Motor neuron (in vitro differentiated cells): ENCODE measurements at regions of chr17 and their contacts with region 1.

Region 1: DNA sequence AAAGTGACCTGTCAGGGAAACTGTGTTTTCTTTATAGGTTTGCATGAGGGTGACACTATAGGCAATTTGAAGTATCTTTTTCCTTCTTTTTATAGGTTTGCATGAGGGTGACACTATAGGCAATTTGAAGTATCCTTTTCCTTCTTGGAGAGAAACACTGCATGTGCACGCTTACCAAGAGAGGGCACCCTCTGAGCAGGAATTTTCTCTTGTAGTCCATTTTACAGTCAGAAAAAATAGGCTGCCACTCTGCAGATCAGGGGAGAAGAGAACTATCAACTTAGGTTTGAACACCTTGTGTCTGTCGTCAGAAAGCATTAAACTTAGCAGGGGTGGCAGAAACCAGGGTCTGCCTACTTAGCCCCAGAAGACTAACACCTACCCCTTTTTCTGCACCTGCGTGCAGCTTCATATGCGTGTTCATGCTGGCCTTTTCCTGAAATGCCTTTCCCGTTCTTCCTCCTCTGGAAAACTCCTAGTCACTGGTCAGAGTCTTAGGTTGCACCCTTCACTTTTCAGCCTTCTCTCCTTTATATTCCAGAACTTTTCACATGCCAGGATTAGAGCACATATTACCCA is 16.4 kb upstream of the SMIM36 start:
- ATAC-seq: peak; percentile 51 to 84 (median 68)
- H3K4me3 ChIP-seq: no peak overlapping the region
- H3K27ac ChIP-seq: no peak overlapping the region
- H3K4me1 ChIP-seq: peaks cover 0 to 2% of the 10 kb centered on the region in 2 donors

Region 2: DNA sequence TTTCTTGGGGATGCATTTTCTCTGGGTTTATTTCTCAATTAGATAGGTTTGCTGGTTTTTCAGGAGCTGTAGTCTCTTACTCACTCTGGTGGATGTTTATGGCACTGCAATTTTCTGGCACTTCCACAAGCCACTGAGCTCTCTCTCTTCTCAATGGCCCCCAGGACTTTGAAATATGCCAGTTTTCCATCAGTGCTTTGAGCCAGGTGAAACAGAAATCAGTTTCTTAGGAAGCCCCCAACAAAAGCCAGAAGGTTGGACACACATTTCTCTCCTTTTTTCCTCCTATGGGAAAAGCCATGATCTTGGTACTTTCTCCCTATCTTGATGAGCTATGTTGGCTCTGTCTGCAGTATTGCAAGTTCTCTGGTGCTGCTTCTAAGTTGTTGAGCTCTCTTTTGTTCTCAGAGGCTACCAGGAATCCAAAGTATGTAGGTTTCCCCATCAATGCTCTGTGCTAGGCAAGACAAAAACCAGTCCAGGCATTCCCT is 74.3 kb after region 1 on chr17:
- in situ Hi-C with region 1: loop called in 1 of 9 experiments (anchors 10 kb)
- ATAC-seq: peak in 4 of 8 experiments; percentile 29 to 74 (median 66)
- H3K4me3 ChIP-seq: no peak overlapping the region
- H3K27ac ChIP-seq: no peak overlapping the region
- H3K4me1 ChIP-seq: no peaks in the 10 kb centered on the region

Region 3: DNA sequence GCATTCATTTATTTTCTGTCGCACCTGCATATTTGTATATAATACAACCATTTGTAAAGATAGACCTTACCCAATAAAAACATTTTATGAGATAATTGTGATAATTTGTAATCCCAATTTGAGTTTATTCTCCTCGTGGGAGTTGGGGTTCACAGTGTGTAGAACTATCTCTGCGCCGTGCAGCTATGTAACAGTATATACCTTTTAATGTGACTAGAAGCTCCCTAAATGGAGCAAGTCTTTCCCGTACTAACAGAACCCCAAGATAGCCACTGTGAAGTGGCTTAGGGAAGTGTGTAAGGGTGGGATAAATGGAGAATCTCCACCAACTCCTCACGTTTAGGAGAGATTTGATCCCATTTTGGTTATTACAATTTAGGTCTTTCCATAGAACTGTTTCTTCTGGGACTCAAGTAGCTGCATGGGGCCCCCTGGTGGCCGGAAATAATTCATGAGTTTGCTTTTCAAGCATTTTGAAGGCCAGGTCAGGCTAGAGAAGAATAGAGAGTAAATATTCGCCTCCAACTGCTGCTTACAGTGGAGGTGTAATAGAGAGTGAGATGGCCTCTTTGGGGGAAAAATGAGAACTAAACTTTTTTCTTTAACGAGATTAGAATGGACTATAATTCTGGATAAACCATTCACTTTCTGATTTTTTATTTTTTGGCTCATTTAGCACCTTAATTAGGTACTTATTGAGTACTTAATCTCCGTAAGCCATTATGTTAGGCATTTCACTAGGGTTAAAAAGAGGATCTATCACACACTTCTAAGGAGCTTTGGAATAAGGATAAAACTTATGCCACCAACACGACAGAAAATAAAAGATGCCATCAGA is 190.5 kb after region 1 on chr17:
- in situ Hi-C with region 1: loop called in 4 of 9 experiments (anchors 5 to 25 kb)
- ATAC-seq: peak in 5 of 8 experiments; percentile 40 to 81 (median 61)
- H3K4me3 ChIP-seq: no peak overlapping the region
- H3K27ac ChIP-seq: no peak overlapping the region
- H3K4me1 ChIP-seq: peaks cover 3 to 8% of the 10 kb centered on the region in 2 donors

Region 4: GRCh38 chr17:55750750-55751657 is 223.4 kb after region 1 on chr17 and contains the start of gene PCTP:
- in situ Hi-C with region 1: loop called in 2 of 9 experiments (anchors 25 kb)
- ATAC-seq: peak; percentile 95 to 97 (median 96)
- H3K4me3 ChIP-seq: peak within 1 kb of the TSS; percentile 43 to 68 (median 52)
- H3K27ac ChIP-seq: peak within 1 kb of the TSS in 1 of 2 donors; percentile 81
- H3K4me1 ChIP-seq: peaks cover 6 to 9% of the 10 kb centered on the region in 2 donors
- total RNA-seq, gene PCTP: 4.6 to 21.0 (median 13.0) TPM

Region 5: DNA sequence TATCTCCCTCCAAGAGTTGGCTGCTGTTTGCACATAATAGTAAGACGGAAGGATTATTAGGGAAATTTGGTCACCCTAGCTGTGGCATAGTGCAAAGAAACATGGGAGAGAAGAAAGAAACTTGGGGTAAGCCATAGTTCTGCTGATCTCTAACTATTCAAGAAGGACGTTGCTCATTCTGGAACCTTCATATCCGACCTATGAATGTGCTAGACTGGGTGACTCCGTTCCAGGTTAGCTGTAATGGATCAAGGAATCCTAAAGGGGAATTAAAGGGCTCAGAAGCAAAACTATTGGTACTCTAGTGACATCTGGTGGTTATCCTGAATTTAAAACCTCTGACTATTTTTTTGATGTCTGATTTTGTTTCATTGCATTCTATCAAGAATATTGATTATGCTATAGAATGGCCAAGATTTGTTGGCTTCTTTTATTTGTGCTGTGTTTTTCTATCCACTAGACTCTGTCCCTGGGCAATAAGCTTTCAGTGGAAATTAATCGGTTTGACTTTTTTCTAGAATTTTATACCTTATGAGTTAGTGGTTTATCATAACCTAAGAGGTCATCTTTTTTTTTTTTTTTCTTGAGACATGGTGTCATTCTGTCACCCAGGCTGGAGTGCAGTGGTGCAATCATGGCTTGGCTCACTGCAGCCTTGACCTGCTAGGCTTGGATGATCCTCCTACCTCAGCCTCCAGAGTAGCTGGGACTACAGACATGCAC is 242.7 kb after region 1 on chr17:
- in situ Hi-C with region 1: loop called in 4 of 9 experiments (anchors 10 to 25 kb)
- ATAC-seq: peak in 4 of 8 experiments; percentile 37 to 62 (median 58)
- H3K4me3 ChIP-seq: no peak overlapping the region
- H3K27ac ChIP-seq: no peak overlapping the region
- H3K4me1 ChIP-seq: peaks cover 0 to 5% of the 10 kb centered on the region in 2 donors

Region 6: GRCh38 chr17:56715613-56716357 is 1188.2 kb after region 1 on chr17:
- in situ Hi-C with region 1: loop called in 1 of 9 experiments (anchors 25 kb)
- ATAC-seq: peak; percentile 90 to 100 (median 96)
- H3K4me3 ChIP-seq: no peak overlapping the region
- H3K27ac ChIP-seq: no peak overlapping the region
- H3K4me1 ChIP-seq: no peaks in the 10 kb centered on the region